Esophagus muscularis mucosa (tissue), 4 donors: ENCODE measurements at regions of chr2 and their contacts with region 1.

Region 1: DNA sequence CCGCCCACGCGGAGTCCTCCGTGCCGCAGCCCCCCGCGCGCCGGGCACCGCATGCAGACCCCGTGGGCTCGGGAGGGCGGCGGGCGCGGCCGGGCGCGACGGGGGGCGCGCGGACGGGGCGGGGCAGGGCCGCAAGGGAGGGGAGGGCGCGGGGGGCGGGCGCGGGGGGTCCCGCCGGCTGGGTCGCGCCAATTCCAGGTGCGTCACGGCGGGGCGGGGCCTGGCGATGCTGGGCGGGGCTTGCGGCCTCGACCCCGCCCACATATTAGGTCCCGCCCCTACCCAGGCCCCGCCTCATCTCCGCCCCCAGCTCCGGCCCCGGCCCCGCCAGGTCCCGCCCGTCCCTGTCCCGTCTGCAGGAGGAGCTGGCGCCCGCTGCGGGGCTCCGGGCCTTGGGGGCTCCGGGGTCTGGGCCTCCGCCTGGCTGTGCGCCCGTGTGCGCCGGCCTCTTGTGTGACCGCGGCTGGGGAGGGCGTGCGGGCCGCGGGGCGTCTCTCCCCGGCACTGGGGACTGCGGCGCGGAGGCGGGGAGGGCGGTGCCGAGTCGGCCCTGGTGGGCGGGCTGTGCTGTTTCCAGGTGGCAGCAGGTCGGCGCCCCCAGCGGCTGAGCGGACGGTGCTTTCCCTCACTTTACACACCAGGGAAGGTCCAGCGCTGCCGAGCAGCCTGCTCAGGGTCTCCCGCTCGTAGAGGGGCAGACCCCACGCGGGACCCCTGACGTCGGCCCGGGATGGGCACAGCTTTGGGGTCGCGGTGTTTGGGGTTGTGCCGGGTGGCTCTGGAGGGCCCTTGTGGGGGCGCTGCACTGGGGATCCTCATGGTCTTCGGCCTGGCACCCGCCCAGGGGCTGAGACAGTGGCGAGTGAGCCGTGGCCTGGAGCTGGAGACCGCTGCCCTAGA is 543 bp downstream of the ING5 start:
- DNase-seq: peak; percentile 95
- H3K4me3 ChIP-seq: peak overlapping the region; percentile 70 to 91 (median 84)
- H3K27ac ChIP-seq: peak overlapping the region; percentile 87 to 99 (median 94)
- H3K4me1 ChIP-seq: peaks cover 15 to 28% (median 28%) of the 10 kb centered on the region in 4 donors
- H3K27me3 ChIP-seq: no peaks in the 10 kb centered on the region
- CTCF ChIP-seq: peak; percentile 23 to 32 (median 25)
- EP300 ChIP-seq: no peak
- POLR2A ChIP-seq: no peak

Region 2: GRCh38 chr2:241355983-241356870 is 346.2 kb before region 1 on chr2 and contains the start of gene FARP2:
- intact Hi-C with region 1: loop called (anchors 10 kb)
- DNase-seq: peak; percentile 100
- H3K4me3 ChIP-seq: peak within 1 kb of the TSS; percentile 64 to 93 (median 83)
- H3K27ac ChIP-seq: peak within 1 kb of the TSS; percentile 87 to 98 (median 92)
- H3K4me1 ChIP-seq: peaks cover 22 to 38% (median 31%) of the 10 kb centered on the region in 4 donors
- H3K27me3 ChIP-seq: no peaks in the 10 kb centered on the region
- CTCF ChIP-seq: no peak
- EP300 ChIP-seq: no peak
- POLR2A ChIP-seq: no peak
- total RNA-seq, gene FARP2: 26.8 to 37.9 (median 30.2) TPM

Region 3: GRCh38 chr2:241813471-241814252 is 111.3 kb after region 1 on chr2:
- intact Hi-C with region 1: no loop called
- DNase-seq: no peak
- H3K4me3 ChIP-seq: no peak overlapping the region
- H3K27ac ChIP-seq: no peak overlapping the region
- H3K4me1 ChIP-seq: peaks cover 0 to 20% (median 0%) of the 10 kb centered on the region in 4 donors
- H3K27me3 ChIP-seq: peaks cover 0 to 57% (median 0%) of the 10 kb centered on the region in 4 donors
- CTCF ChIP-seq: no peak
- EP300 ChIP-seq: no peak
- POLR2A ChIP-seq: no peak

Region 4: GRCh38 chr2:241989074-241989473 is 286.7 kb after region 1 on chr2:
- intact Hi-C with region 1: no loop called
- DNase-seq: no peak
- H3K4me3 ChIP-seq: no peak overlapping the region
- H3K27ac ChIP-seq: no peak overlapping the region
- H3K4me1 ChIP-seq: no peaks in the 10 kb centered on the region
- H3K27me3 ChIP-seq: peaks cover 0 to 20% (median 0%) of the 10 kb centered on the region in 4 donors
- CTCF ChIP-seq: no peak
- EP300 ChIP-seq: no peak
- POLR2A ChIP-seq: no peak